Psoas muscle (tissue), 8 donors: ENCODE measurements at regions of chr5 and their contacts with region 1.

Region 1: DNA sequence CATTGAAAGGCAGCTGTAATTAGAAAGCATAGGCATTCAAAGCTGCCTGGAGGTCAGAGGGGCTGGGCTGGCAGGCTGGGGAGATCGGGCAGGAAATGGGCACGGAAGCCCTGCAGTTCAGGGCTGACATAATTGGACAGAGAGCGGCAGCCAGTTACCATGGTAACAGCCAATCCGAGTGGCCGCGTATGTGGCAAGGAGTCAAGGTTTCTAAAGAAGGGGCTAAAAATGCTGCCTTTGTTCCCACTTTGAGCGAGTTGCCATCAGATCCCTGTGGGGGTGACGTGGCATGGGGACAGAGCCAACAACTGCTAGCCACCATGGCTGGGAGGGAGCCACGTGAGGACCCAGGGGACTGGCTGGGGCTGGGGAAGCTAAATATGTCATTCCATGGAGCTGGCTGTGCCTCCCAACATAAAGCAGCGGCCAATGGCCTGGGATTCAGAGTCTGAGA is 44.7 kb upstream of the NDFIP1 start:
- DNase-seq: peak; percentile 77 to 85
- ATAC-seq: peak; percentile 72 to 93 (median 88)
- H3K4me3 ChIP-seq: peak overlapping the region; percentile 51
- H3K27ac ChIP-seq: peak overlapping the region; percentile 72
- H3K4me1 ChIP-seq: peaks cover 17% of the 10 kb centered on the region
- H3K27me3 ChIP-seq: no peaks in the 10 kb centered on the region
- CTCF ChIP-seq: no peak

Region 2: GRCh38 chr5:142024771-142025304 is 39.1 kb before region 1 on chr5:
- intact Hi-C with region 1: loop called in 1 of 2 experiments (anchors 5 kb)
- DNase-seq: peak; percentile 87 to 92
- ATAC-seq: peak; percentile 98 to 100 (median 99)
- H3K4me3 ChIP-seq: peak overlapping the region; percentile 69
- H3K27ac ChIP-seq: peak overlapping the region; percentile 87
- H3K4me1 ChIP-seq: peaks cover 7% of the 10 kb centered on the region
- H3K27me3 ChIP-seq: no peaks in the 10 kb centered on the region
- CTCF ChIP-seq: no peak